ENCODE measurements at regions of chr7 and their contacts with region 1.

Region 1: DNA sequence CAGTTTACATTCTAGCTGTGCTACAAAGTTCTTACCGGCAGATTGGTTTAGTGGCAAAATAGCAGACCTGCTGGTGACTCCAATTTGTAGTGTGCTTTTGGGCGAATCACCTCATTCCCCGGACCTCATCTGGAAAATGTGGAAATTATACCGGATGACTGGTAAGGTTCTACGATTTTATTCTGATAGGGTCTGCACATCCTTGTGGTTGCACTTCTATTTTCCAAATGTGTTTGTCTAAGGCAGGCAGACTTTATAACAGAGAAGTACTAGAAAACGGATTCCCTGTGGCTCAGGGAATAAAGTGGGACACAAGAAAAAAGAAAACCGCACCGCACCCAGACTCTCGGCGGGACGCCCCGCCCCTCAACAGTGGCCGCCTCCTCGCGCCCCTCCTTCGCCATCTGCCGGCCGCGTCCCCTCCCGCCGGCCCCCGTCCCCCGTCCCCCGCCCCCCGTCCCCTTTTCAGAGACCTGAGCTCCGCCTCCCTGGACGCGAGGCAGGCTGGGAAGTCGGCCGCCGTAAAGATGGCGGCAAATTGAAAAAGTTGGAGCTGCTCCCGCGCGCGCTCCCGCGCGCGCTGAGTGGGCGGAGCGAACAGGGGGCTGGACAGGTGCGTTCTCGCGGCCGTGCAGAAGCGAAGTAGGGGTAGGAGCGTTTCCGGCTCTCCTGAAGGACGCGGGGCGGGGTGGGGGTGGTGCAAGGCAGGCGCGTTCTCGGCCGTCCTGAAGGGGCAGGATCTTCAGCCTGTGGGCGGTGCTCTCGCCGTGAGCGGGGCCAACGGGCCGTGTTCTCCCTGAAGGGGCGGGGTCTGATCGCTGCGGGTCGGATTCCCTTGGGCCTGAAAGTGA is 531 bp upstream of the CCM2 start:
- DNase-seq: peak; percentile 99 to 100 (median 100)
- ATAC-seq: peak; percentile 94 to 98 (median 96)
- H3K4me3 ChIP-seq: peak overlapping the region; percentile 28 to 85 (median 72)
- H3K27ac ChIP-seq: peak overlapping the region; percentile 47 to 95 (median 88)
- H3K4me1 ChIP-seq: peaks cover 0 to 43% (median 13%) of the 10 kb centered on the region in 12 donors
- H3K27me3 ChIP-seq: no peaks in the 10 kb centered on the region
- CTCF ChIP-seq: peak in 7 of 12 donors; percentile 4 to 30 (median 11)
- POLR2A ChIP-seq: peak in 1 of 2 donors; percentile 54

Region 2: DNA sequence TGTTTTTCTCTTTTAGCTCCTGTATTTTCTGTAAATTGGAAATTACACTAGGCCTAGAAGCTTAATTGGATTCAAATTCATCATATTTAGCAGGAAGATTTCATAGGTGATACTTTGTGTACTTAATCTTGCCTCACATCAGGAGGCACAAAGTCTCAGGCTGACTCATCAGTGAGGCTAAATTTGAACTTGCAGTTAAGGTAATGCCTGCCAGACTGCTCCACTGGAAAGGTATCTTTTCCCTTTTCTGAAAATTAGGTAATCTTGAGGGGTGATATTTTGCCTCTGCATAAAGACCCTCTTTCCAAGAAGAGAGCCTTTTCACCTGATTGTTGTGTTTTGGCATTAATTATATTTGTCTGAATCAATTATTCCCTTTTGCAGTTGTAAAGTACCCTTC is 188.4 kb before region 1 on chr7:
- intact Hi-C with region 1: no loop called
- DNase-seq: no peak
- ATAC-seq: no peak
- H3K4me3 ChIP-seq: no peak overlapping the region
- H3K27ac ChIP-seq: no peak overlapping the region
- H3K4me1 ChIP-seq: no peaks in the 10 kb centered on the region
- H3K27me3 ChIP-seq: no peaks in the 10 kb centered on the region
- CTCF ChIP-seq: no peak
- POLR2A ChIP-seq: no peak

Region 3: DNA sequence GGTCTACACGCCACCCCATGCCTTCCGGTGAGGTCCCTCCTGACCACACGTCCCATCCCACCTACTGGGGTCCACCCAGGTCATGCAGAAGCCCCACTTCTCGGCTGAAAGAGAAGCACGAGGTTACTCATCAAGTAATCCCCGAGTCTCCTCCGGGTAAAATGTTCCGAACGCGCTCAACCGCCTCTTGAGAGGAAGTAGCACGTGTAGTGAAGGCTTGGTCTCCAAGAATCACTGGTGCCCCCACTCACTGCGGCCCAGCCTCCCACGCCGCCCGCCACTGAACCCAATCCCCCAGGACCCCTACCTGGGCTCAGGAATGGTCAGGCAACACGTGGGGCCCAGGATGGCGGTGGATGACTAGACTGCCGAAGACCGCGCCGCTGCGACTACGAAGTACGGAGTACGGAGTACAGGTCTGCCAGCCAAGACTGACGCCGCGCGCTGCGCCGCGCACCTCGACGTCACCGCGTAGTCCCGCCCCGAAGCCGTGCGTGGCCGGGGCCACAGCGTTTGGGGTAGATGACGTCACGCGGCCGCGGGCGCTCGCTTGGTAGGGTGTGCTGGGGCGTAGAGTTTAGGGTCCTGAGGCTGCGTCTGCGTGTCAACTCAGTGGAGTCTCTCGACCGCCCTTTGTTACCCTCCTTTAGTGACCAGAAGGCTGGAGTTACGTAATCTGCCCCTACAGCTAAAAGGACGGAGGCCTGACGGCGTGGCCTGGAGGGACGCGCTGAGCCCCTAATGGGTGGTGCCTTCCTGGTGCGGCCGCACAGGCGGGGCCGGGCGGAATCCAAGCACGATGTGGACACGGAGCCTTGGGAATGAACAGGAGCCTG is 13.0 kb before region 1 on chr7:
- intact Hi-C with region 1: loop called in 1 of 10 experiments (anchors 1 kb)
- DNase-seq: peak; percentile 94 to 98 (median 97)
- ATAC-seq: peak; percentile 98 to 99 (median 98)
- H3K4me3 ChIP-seq: peak overlapping the region; percentile 18 to 74 (median 62)
- H3K27ac ChIP-seq: peak overlapping the region; percentile 89 to 98 (median 96)
- H3K4me1 ChIP-seq: peaks cover 0 to 54% (median 24%) of the 10 kb centered on the region in 12 donors
- H3K27me3 ChIP-seq: no peaks in the 10 kb centered on the region
- CTCF ChIP-seq: no peak
- POLR2A ChIP-seq: peak; percentile 39 to 96

Region 4: DNA sequence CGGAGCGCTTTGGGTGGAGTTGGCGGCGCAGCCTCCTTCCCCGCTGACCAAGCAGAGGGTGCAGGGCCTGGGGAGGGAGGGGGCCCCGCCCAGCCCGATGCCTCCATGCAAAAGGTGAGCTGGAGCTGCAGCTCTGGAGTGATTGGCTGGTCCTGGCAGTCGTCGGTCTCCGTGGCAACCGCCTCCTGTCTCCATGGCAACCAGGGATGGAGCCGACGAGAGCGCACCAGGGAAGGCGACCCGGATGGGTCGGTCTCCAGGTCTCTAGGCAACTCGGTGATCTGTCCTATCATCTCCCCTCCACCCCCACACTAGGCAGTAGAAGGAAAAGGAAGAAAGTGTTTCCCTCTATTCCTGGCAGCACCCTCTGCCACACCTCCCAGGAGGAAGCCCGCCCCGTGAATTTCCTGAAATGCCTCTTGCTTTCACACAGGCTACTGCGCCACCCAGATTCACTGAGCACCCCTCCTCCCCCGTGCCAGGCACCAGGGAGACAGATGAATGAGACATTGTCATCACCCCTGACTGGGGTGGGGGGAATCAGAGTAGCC is 89.9 kb after region 1 on chr7:
- intact Hi-C with region 1: no loop called
- DNase-seq: peak in 4 of 5 donors; percentile 38 to 69 (median 56)
- ATAC-seq: peak; percentile 27 to 48 (median 32)
- H3K4me3 ChIP-seq: peak overlapping the region; percentile 36 to 75 (median 60)
- H3K27ac ChIP-seq: peak overlapping the region in 6 of 12 donors; percentile 6 to 77 (median 56)
- H3K4me1 ChIP-seq: peaks cover 0 to 17% (median 3%) of the 10 kb centered on the region in 12 donors
- H3K27me3 ChIP-seq: peaks cover 0 to 19% (median 0%) of the 10 kb centered on the region in 9 donors
- CTCF ChIP-seq: no peak
- POLR2A ChIP-seq: no peak

Region 5: GRCh38 chr7:45105588-45106188 is 106.2 kb after region 1 on chr7:
- intact Hi-C with region 1: loop called in 4 of 10 experiments (anchors 2 to 5 kb)
- DNase-seq: peak in 1 of 5 donors; percentile 46
- ATAC-seq: peak; percentile 38 to 72 (median 66)
- H3K4me3 ChIP-seq: no peak overlapping the region
- H3K27ac ChIP-seq: peak overlapping the region in 2 of 12 donors; percentile 33 to 42
- H3K4me1 ChIP-seq: peaks cover 5 to 70% (median 36%) of the 10 kb centered on the region in 12 donors
- H3K27me3 ChIP-seq: no peaks in the 10 kb centered on the region
- CTCF ChIP-seq: no peak
- POLR2A ChIP-seq: no peak

Region 6: GRCh38 chr7:45136106-45137060 is 136.9 kb after region 1 on chr7:
- intact Hi-C with region 1: no loop called
- DNase-seq: peak in 3 of 5 donors; percentile 46 to 53 (median 51)
- ATAC-seq: peak; percentile 45 to 86 (median 76)
- H3K4me3 ChIP-seq: no peak overlapping the region
- H3K27ac ChIP-seq: no peak overlapping the region
- H3K4me1 ChIP-seq: peaks cover 0 to 3% (median 0%) of the 10 kb centered on the region in 12 donors
- H3K27me3 ChIP-seq: no peaks in the 10 kb centered on the region
- CTCF ChIP-seq: peak; percentile 74 to 93 (median 86)
- POLR2A ChIP-seq: no peak

Measured in heart left ventricle (tissue), 16 donors.